Endothelial cell of umbilical vein (primary cell): ENCODE measurements at regions of chr11 and their contacts with region 1.

Region 1: GRCh38 chr11:119334174-119334930 is at the start of gene RNF26:
- DNase-seq: peak; percentile 97
- H3K4me3 ChIP-seq: peak within 1 kb of the TSS; percentile 54 to 78 (median 77)
- H3K27ac ChIP-seq: peak within 1 kb of the TSS; percentile 34
- H3K4me1 ChIP-seq: peaks cover 34% of the 10 kb centered on the region
- H3K27me3 ChIP-seq: peaks cover 0 to 2% of the 10 kb centered on the region in 2 experiments
- CTCF ChIP-seq: no peak
- POLR2A ChIP-seq: peak; percentile 71
- total RNA-seq, gene RNF26: 37.9 and 40.1 TPM in 2 replicates

Region 2: DNA sequence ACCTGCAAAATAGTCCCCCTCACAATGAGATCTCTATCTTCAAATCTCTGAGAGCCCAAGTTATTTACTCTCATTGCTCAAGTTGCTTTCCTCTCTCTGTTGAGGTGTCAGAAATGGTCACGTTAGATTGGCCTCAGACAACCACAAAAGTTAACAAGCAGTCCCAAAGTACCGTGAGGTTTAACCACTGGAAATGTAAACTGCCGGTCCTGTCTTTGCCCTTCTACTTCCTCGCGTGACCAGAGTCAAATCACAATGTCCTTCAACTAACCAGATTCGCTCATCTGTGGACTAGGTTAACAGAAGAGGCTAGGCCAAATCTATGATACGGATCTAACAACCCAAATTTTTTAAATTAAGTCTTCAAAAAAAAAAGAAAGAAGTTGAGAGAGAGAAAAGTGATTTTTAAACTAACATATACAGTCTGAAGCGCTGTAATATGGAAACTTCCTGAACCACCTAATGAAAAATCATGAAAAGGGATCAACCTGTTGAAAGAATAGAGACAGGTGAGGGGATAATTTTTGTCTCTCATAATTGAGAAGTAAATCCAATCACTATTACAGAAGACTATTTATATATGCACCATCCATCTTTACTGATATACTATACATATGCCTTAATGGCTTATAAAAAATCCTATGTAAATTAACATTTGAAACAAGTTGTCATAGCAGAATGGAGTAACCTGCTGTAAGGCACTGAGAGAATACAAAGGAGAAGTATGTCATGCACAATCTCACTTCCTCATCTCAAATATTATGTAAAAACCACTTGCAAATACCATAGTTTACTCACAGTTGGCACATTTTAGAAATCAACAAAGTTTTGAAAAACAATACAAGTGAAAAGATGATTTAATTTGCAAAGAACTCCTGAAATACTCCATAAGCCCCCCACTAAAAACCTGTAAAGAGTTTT is 1106.2 kb before region 1 on chr11:
- CTCF ChIA-PET with region 1: no interaction called
- POLR2A ChIA-PET with region 1: no interaction called
- dilution Hi-C with region 1: no loop called
- intact Hi-C with region 1: no loop called
- DNase-seq: peak; percentile 43
- H3K4me3 ChIP-seq: no peak overlapping the region
- H3K27ac ChIP-seq: peak overlapping the region; percentile 34
- H3K4me1 ChIP-seq: peaks cover 27% of the 10 kb centered on the region
- H3K27me3 ChIP-seq: no peaks in the 10 kb centered on the region
- CTCF ChIP-seq: no peak
- POLR2A ChIP-seq: no peak

Region 3: DNA sequence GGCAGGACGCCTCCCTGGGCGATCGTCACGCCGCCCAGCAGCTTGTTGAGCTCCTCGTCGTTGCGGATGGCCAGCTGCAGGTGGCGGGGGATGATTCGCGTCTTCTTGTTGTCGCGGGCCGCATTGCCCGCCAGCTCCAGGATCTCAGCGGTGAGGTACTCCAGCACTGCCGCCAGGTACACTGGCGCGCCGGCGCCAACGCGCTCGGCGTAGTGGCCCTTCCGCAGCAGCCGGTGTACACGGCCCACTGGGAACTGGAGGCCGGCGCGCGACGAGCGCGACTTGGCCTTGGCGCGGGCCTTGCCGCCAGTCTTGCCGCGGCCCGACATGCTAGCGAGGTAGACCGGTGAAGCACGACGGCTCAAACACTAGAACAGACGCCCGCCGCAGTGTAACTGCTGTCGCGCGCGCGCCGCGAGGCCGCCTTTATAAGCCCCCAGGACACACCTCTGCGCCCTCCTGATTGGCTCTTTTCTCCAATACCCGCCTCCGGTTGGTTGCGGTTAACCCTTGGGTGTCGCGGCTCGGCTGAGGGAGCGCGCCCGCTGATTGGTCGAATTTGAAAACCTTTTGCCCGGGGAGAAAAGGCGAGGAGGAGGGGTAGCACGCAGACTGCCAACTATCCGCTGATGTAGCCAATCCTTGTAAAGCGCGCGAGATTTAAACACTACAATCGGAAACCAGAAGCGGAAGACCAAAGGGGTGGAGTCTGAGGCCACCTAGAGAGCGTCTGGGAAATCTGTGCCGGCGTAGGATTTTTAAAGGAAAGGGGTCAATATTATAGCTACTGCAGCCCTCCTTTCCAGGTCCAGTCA is 239.1 kb before region 1 on chr11:
- CTCF ChIA-PET with region 1: interaction called, 19 read pairs
- POLR2A ChIA-PET with region 1: interaction called, 17 read pairs
- dilution Hi-C with region 1: no loop called
- intact Hi-C with region 1: loop called (anchors 1 kb)
- DNase-seq: peak; percentile 100
- H3K4me3 ChIP-seq: peak overlapping the region; percentile 70 to 95 (median 90)
- H3K27ac ChIP-seq: peak overlapping the region; percentile 59
- H3K4me1 ChIP-seq: peaks cover 27% of the 10 kb centered on the region
- H3K27me3 ChIP-seq: no peaks in the 10 kb centered on the region
- CTCF ChIP-seq: peak in 1 of 2 donors; percentile 1
- POLR2A ChIP-seq: peak; percentile 100

Region 4: GRCh38 chr11:119168471-119169281 is 165.7 kb before region 1 on chr11 and contains the start of gene NLRX1:
- CTCF ChIA-PET with region 1: interaction called, 11 read pairs
- POLR2A ChIA-PET with region 1: no interaction called
- dilution Hi-C with region 1: no loop called
- intact Hi-C with region 1: no loop called
- DNase-seq: peak; percentile 79
- H3K4me3 ChIP-seq: peak within 1 kb of the TSS; percentile 6 to 48 (median 17)
- H3K27ac ChIP-seq: peak within 1 kb of the TSS; percentile 55
- H3K4me1 ChIP-seq: peaks cover 11% of the 10 kb centered on the region
- H3K27me3 ChIP-seq: no peaks in the 10 kb centered on the region
- CTCF ChIP-seq: peak; percentile 89 to 94
- POLR2A ChIP-seq: peak; percentile 71
- total RNA-seq, gene NLRX1: 14.6 and 15.1 TPM in 2 replicates

Region 5: DNA sequence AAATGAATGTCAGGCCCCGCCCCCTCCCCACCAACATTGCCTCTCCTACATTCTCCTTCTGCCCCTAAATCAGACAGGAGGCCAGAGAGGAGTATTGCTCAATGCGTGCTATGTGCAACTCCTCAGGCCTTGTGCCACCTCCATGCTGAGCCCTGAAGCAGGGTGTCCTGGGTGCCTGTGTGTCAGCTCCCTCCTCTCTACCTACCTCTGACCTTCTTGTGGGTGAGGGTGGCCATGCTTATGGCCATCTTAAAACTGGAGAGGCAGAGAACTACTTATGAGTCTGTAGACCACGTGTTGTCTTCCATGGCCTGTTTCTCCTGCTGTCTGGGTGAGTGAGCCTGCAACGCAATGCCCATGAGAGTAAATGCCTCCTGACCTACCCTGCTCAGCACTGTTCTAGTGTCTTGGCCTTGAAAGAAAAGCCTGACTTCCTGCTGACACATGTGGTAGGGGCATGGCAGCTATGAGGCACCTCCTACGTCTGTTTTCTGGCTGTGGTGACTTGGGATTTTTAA is 27.9 kb before region 1 on chr11:
- CTCF ChIA-PET with region 1: interaction called, 68 read pairs
- POLR2A ChIA-PET with region 1: interaction called, 11 read pairs
- dilution Hi-C with region 1: no loop called
- intact Hi-C with region 1: no loop called
- DNase-seq: peak; percentile 39
- H3K4me3 ChIP-seq: no peak overlapping the region
- H3K27ac ChIP-seq: no peak overlapping the region
- H3K4me1 ChIP-seq: peaks cover 2% of the 10 kb centered on the region
- H3K27me3 ChIP-seq: no peaks in the 10 kb centered on the region
- CTCF ChIP-seq: no peak
- POLR2A ChIP-seq: no peak

Region 6: GRCh38 chr11:119356349-119357031 is 22.1 kb after region 1 on chr11:
- CTCF ChIA-PET with region 1: interaction called, 94 read pairs
- POLR2A ChIA-PET with region 1: no interaction called
- dilution Hi-C with region 1: no loop called
- intact Hi-C with region 1: no loop called
- DNase-seq: peak; percentile 67
- H3K4me3 ChIP-seq: peak overlapping the region; percentile 65 to 69 (median 67)
- H3K27ac ChIP-seq: peak overlapping the region; percentile 51
- H3K4me1 ChIP-seq: peaks cover 5% of the 10 kb centered on the region
- H3K27me3 ChIP-seq: no peaks in the 10 kb centered on the region
- CTCF ChIP-seq: peak; percentile 91 to 94
- POLR2A ChIP-seq: no peak

Region 7: GRCh38 chr11:119474682-119475596 is 140.6 kb after region 1 on chr11:
- CTCF ChIA-PET with region 1: interaction called, 12 read pairs
- POLR2A ChIA-PET with region 1: no interaction called
- dilution Hi-C with region 1: no loop called
- intact Hi-C with region 1: no loop called
- DNase-seq: peak; percentile 47
- H3K4me3 ChIP-seq: no peak overlapping the region
- H3K27ac ChIP-seq: no peak overlapping the region
- H3K4me1 ChIP-seq: no peaks in the 10 kb centered on the region
- H3K27me3 ChIP-seq: peaks cover 0 to 2% of the 10 kb centered on the region in 2 experiments
- CTCF ChIP-seq: peak; percentile 79 to 83
- POLR2A ChIP-seq: no peak